Activated B cell treated with CpG ODN at 0.5 μM for 24 hours (primary cell): ENCODE measurements at regions of chr22 and their contacts with region 1.

Region 1: DNA sequence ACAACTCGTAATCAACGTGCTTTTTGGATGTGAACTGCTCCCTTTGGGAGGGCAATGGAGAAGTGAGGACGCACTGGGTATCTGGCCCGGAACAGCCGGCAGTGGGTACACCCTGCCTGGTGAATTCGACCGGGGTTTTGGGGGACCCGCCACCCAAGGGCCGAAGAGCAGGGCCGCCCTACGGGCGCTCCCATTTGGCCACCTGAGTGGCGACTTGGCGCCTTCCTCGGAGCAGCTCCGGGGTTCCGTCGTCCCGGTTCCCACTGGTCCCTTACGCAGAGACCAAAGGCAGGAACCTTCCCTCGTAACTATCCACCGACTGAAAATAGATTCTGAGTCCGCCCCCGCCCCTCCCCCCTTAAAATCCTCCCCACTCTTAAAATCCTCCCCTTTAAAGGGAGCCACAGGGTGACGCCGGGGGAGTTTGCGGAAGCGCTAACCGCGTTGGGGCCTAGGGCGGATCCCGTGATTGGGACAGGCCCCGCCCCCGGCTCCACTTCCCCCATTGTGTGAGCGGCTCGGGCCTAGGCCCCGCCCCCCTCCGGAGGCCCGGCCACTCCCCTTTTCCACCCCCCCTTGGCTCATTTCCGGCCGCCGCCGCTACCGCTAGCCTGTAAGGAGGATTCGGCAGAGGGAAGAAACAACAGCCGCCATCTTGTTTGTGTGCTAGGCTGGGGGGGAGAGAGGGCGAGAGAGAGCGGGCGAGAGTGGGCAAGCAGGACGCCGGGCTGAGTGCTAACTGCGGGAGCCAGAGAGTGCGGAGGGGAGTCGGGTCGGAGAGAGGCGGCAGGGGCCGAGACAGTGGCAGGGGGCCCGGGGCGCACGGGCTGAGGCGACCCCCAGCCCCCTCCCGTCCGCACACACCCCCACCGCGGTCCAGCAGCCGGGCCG is 1.0 kb upstream of the EP300 start:
- DNase-seq: peak; percentile 99
- ATAC-seq: peak; percentile 83
- H3K4me3 Mint-ChIP-seq: peak overlapping the region; percentile 98
- H3K27ac Mint-ChIP-seq: peak overlapping the region; percentile 99
- H3K4me1 Mint-ChIP-seq: peaks cover 33% of the 10 kb centered on the region
- H3K27me3 Mint-ChIP-seq: no peaks in the 10 kb centered on the region
- CTCF ChIP-seq: no peak

Region 2: DNA sequence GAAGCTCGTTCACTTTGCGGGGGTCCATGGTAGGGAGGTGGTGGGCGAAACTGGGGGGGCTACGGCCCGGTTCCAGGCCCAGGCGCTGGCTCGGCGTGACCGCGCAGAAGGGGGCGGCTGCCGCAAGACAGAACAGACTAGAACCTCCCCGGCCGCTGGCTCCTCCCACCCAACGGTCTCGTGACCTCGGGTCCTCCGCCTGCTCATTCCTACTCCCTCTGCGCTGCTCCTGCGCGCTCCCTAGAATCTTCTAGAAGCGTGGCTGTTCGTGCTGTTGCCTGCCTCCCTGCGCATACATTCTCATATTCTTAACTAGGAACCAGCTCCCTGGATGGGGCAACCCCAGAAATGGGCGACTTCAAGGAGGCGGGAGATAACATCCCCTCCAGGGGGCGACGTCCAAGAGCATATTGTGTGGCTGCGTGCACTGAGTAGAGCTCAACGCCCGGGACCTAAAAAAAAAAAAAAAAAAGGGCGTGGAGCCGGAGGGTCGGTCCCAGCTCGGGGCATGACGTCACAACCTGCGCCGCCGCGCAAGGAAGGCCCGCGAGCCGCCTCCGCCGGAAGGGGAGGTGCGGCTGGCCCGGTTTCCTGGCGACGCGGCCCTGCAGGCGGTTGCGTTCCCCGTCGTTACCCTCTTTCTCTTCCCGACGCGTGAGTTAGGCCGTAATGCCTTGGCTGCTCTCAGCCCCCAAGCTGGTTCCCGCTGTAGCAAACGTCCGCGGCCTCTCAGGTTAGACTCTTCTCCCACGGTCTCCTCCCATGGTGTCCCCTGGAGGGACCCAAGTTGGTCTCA is 234.7 kb before region 1 on chr22 and contains the starts of genes ST13 and XPNPEP3:
- CTCF ChIA-PET with region 1: no interaction called
- POLR2A ChIA-PET with region 1: interaction called, 11 read pairs
- intact Hi-C with region 1: loop called (anchors 1 kb)
- DNase-seq: peak; percentile 96
- ATAC-seq: peak; percentile 90
- H3K4me3 Mint-ChIP-seq: peak within 1 kb of the TSS; percentile 98
- H3K27ac Mint-ChIP-seq: peak within 1 kb of the TSS; percentile 100
- H3K4me1 Mint-ChIP-seq: peaks cover 47% of the 10 kb centered on the region
- H3K27me3 Mint-ChIP-seq: no peaks in the 10 kb centered on the region
- CTCF ChIP-seq: no peak
- total RNA-seq, gene ST13: 183 and 221 TPM in 2 replicates
- total RNA-seq, gene XPNPEP3: 20.3 and 20.8 TPM in 2 replicates

Region 3: GRCh38 chr22:40939202-40939601 is 152.2 kb before region 1 on chr22:
- CTCF ChIA-PET with region 1: interaction called, 3 read pairs
- POLR2A ChIA-PET with region 1: interaction called, 18 read pairs
- intact Hi-C with region 1: no loop called
- DNase-seq: no peak
- ATAC-seq: peak; percentile 9
- H3K4me3 Mint-ChIP-seq: peak overlapping the region; percentile 13
- H3K27ac Mint-ChIP-seq: peak overlapping the region; percentile 16
- H3K4me1 Mint-ChIP-seq: peaks cover 40% of the 10 kb centered on the region
- H3K27me3 Mint-ChIP-seq: no peaks in the 10 kb centered on the region
- CTCF ChIP-seq: no peak

Region 4: DNA sequence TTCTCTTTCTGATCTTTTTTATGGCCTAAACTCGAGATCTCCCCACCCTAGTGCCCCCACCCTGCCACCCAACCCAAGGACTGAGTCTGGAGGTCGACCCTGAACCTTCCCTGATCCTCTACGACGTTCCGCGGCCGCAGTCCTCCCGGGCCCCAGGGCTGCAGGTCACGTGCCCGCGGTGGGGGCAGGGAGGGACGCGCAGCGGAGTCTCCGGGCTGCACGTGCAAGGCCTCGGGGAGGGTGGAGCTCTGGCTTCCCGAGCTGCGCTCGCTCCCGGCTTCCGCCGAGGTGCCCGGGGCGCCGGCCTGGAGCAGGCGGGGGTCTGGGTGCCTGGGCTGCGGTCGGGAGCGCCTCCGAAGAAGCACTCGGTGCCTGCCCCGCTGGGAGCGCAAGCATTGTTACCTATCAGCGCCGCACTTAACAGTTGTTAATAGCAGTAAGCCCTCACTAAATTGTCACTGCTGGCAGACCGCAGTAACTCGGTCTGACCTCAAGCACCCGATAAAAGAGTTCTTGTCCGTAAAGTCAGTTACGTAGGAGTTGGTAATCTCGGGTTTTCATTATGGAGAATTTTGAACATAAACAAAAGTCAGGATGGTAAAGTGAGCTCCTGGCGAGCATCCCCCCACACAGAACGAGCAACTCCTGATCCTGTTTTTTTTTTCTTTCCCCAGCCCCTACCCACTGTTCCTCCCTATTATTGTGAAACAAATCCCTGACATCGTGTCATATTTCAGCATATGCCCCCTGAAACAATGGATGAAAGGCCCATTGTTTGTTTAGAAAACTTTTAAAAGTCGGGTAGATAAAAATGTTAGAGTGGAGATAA is 68.7 kb before region 1 on chr22:
- CTCF ChIA-PET with region 1: interaction called, 7 read pairs
- POLR2A ChIA-PET with region 1: interaction called, 122 read pairs
- intact Hi-C with region 1: loop called (anchors 1 kb)
- DNase-seq: peak; percentile 87
- ATAC-seq: peak; percentile 75
- H3K4me3 Mint-ChIP-seq: peak overlapping the region; percentile 85
- H3K27ac Mint-ChIP-seq: peak overlapping the region; percentile 87
- H3K4me1 Mint-ChIP-seq: peaks cover 19% of the 10 kb centered on the region
- H3K27me3 Mint-ChIP-seq: no peaks in the 10 kb centered on the region
- CTCF ChIP-seq: no peak

Region 5: GRCh38 chr22:41078931-41079330 is 12.4 kb before region 1 on chr22:
- CTCF ChIA-PET with region 1: no interaction called
- POLR2A ChIA-PET with region 1: interaction called, 13 read pairs
- intact Hi-C with region 1: no loop called
- DNase-seq: no peak
- ATAC-seq: peak; percentile 90
- H3K4me3 Mint-ChIP-seq: peak overlapping the region; percentile 35
- H3K27ac Mint-ChIP-seq: peak overlapping the region; percentile 37
- H3K4me1 Mint-ChIP-seq: peaks cover 25% of the 10 kb centered on the region
- H3K27me3 Mint-ChIP-seq: no peaks in the 10 kb centered on the region
- CTCF ChIP-seq: no peak

Region 6: DNA sequence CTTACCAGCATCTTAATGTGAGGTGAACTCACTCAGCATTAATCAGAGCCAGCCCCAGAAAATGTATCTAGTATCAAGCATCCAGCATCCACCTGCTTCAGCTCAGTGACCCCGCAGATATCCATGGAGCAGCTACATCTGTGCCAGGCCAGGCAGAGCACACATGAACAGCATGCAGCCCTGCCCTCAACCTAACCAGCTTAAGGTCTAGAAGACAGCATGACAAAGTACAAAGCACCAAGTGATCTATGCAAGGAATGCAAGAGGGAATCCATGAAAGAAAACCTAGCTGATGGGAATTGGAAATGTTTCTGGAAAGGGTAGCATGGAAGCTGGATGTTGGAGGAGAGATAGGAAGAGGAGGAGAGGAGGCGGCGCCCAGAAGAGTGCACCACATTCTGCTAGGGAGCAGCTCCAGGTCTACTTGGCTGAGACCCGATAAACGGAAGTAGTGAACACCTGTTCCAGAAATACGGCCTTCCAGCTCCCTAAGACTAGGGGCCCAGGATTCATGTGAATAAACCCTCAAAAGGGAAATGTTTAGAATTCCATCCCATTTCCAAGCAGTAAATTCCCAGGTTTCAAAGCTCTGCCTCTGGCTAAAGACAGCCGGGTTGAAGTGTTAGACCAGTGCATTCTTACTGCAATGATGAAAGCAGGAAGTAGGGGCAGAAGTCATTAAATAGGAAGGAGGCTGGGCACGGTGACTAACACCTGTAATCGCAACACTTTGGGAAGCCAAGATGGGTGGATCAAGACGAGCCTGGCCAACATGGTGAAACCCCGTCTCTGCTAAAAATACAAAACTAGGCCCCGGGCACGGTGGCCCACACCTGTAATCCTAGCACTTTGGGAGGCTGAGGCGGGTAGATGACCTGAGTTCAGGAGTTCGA is 90.2 kb after region 1 on chr22:
- CTCF ChIA-PET with region 1: no interaction called
- POLR2A ChIA-PET with region 1: no interaction called
- intact Hi-C with region 1: no loop called
- DNase-seq: no peak
- ATAC-seq: no peak
- H3K4me3 Mint-ChIP-seq: no peak overlapping the region
- H3K27ac Mint-ChIP-seq: peak overlapping the region; percentile 8
- H3K4me1 Mint-ChIP-seq: peaks cover 20% of the 10 kb centered on the region
- H3K27me3 Mint-ChIP-seq: no peaks in the 10 kb centered on the region
- CTCF ChIP-seq: no peak

Region 7: DNA sequence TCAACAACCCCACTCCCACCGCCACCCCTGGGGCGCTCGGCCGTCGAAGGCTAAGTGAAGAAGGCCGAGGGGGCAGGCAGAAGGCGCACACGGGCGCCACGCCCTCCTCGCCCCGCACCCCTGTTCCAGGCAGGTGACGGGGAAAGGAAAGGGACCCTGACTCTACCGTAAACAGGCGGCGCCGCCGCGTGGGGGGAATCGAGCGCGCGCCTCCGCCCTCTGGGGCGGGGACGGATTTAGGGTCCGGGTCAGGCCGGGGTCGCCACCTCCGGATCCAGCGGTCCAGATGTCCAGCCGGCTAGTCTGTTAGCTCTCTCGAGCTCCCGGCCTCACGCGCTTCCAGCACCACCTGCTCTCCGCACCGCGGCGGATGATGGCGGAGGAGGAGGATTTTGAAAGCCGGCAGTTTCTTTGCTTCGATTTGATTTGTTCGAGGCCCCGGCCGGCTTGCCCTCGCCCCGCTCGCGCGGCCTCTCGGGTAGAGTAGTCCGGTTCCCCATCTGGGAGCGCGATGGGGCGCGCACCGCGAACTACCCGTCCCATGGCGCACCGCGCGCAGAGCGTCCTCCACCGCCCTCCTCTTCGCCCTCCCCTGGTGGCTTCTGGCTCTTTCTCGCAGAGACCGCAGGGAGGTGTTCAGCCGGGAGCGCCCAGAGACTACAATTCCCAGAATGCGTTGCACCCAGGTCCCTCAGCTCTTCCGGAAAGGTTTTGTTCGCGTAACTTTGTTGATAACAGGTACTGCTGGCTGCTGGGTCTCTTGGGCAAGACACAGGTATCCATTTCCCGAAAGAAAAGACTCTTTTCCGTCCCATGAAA is 194.7 kb after region 1 on chr22 and contains the start of gene RANGAP1:
- CTCF ChIA-PET with region 1: no interaction called
- POLR2A ChIA-PET with region 1: interaction called, 4 read pairs
- intact Hi-C with region 1: loop called (anchors 1 kb)
- DNase-seq: peak; percentile 93
- ATAC-seq: peak; percentile 97
- H3K4me3 Mint-ChIP-seq: peak within 1 kb of the TSS; percentile 94
- H3K27ac Mint-ChIP-seq: peak within 1 kb of the TSS; percentile 98
- H3K4me1 Mint-ChIP-seq: peaks cover 28% of the 10 kb centered on the region
- H3K27me3 Mint-ChIP-seq: no peaks in the 10 kb centered on the region
- CTCF ChIP-seq: no peak
- total RNA-seq, gene RANGAP1: 48.9 and 56.4 TPM in 2 replicates

Region 8: GRCh38 chr22:41381329-41382097 is 290.1 kb after region 1 on chr22 and contains the start of gene TEF:
- CTCF ChIA-PET with region 1: no interaction called
- POLR2A ChIA-PET with region 1: interaction called, 9 read pairs
- intact Hi-C with region 1: loop called (anchors 5 kb)
- DNase-seq: peak; percentile 95
- ATAC-seq: peak; percentile 84
- H3K4me3 Mint-ChIP-seq: peak within 1 kb of the TSS; percentile 91
- H3K27ac Mint-ChIP-seq: peak within 1 kb of the TSS; percentile 98
- H3K4me1 Mint-ChIP-seq: peaks cover 24% of the 10 kb centered on the region
- H3K27me3 Mint-ChIP-seq: no peaks in the 10 kb centered on the region
- CTCF ChIP-seq: no peak
- total RNA-seq, gene TEF: 5.1 and 5.2 TPM in 2 replicates